ENCODE measurements at regions of chr12 and their contacts with region 1.

Region 1: GRCh38 chr12:27733052-27733656 is 22.5 kb downstream of the MRPS35 start:
- DNase-seq: peak; percentile 36 to 68 (median 57)
- H3K4me3 ChIP-seq: no peak overlapping the region
- H3K27ac ChIP-seq: no peak overlapping the region
- H3K4me1 ChIP-seq: no peaks in the 10 kb centered on the region
- H3K27me3 ChIP-seq: no peaks in the 10 kb centered on the region

Region 2: DNA sequence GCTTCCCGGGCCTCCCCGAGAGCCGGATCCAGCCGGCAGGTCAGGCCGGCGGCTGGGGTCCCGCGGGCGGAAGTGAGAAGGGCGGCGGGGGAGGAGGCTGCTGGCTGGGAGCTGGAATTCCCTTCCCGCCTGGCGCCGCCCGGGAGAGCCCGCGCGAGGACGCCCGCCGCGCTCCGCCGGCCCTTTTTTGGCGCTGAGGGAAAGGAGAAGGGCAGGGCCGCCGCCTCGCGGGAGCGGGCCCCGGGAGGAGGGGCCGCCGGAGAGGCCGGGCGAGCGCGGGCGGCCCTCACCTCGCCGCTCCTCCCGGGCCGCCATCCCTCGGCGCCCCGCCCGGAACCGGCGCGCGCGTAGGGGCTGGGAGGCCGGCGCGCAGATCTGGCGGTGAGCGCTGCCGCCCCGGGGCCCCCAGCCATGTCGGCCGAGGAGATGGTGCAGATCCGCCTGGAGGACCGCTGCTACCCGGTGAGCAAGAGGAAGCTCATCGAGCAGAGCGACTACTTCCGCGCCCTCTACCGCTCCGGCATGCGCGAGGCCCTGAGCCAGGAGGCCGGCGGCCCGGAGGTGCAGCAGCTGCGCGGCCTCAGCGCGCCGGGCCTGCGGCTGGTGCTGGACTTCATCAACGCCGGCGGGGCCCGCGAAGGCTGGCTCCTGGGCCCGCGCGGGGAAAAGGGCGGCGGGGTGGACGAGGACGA is 46.9 kb after region 1 on chr12 and contains the starts of genes KLHL42 and MANSC4:
- CTCF ChIA-PET with region 1: interaction called, 10 read pairs
- POLR2A ChIA-PET with region 1: no interaction called
- DNase-seq: peak; percentile 72 to 88 (median 80)
- H3K4me3 ChIP-seq: peak within 1 kb of the TSS; percentile 57 to 91 (median 82)
- H3K27ac ChIP-seq: peak within 1 kb of the TSS; percentile 25 to 70
- H3K4me1 ChIP-seq: peaks cover 0 to 25% (median 20%) of the 10 kb centered on the region in 4 experiments
- H3K27me3 ChIP-seq: no peaks in the 10 kb centered on the region

Region 3: GRCh38 chr12:27821259-27821973 is 88.3 kb after region 1 on chr12:
- CTCF ChIA-PET with region 1: interaction called, 30 read pairs
- POLR2A ChIA-PET with region 1: interaction called, 3 read pairs
- DNase-seq: peak; percentile 56 to 72 (median 68)
- H3K4me3 ChIP-seq: peak overlapping the region in 2 of 7 experiments; percentile 6 to 30
- H3K27ac ChIP-seq: no peak overlapping the region
- H3K4me1 ChIP-seq: peaks cover 0 to 3% (median 1%) of the 10 kb centered on the region in 4 experiments
- H3K27me3 ChIP-seq: peaks cover 0 to 7% (median 0%) of the 10 kb centered on the region in 5 experiments

Region 4: GRCh38 chr12:27870939-27871338 is 137.8 kb after region 1 on chr12:
- CTCF ChIA-PET with region 1: no interaction called
- POLR2A ChIA-PET with region 1: no interaction called
- DNase-seq: no peak
- H3K4me3 ChIP-seq: no peak overlapping the region
- H3K27ac ChIP-seq: no peak overlapping the region
- H3K4me1 ChIP-seq: no peaks in the 10 kb centered on the region
- H3K27me3 ChIP-seq: no peaks in the 10 kb centered on the region

Region 5: DNA sequence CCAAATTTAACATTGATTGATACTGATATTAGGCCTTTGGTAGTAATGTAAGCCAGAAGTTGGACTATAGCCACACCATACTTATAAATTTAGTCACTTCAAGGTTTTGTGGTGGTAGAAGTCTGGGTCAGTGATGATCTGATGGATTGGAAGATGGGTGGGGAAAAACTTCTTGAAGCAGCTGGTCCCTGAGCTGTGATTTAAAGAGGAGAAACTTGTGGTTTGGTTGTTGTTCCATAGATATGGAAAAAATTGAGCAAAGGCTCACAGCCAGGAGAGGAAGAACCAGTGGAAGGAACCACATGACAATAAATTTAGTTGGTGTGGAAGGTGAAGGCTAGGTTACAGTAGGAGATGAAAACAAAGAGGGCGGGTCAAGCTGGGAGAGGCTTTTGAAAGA is 213.3 kb after region 1 on chr12:
- CTCF ChIA-PET with region 1: interaction called, 22 read pairs
- POLR2A ChIA-PET with region 1: no interaction called
- DNase-seq: no peak
- H3K4me3 ChIP-seq: no peak overlapping the region
- H3K27ac ChIP-seq: no peak overlapping the region
- H3K4me1 ChIP-seq: no peaks in the 10 kb centered on the region
- H3K27me3 ChIP-seq: peaks cover 0 to 3% (median 0%) of the 10 kb centered on the region in 5 experiments

Measured in common myeloid progenitor, CD34-positive (primary cell).